GM10248 (cell line): ENCODE measurements at regions of chr4 and their contacts with region 1.

Region 1: GRCh38 chr4:173318648-173319211 is 15.4 kb downstream of the HMGB2 start:
- DNase-seq: no peak
- CTCF ChIP-seq: peak; percentile 9

Region 2: DNA sequence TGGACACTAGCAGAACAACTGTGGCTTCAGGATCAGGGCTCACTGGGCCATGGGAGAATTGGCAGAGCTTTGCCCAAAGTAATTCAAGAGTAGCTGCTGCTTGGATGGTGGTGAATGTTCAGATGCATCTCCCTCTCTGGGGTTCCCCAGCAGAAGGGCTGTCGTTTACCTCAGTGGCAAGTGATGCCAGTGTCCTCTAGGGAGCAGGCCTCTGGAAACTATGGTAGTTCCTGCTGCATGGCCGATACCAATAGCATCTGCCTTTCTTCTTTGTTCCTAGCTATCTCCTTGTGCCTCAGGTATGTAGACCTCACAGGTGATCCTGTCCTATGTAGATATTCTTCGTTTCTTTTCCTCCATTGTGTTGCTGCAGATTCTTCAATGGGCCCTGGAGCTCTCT is 11.0 kb before region 1 on chr4:
- CTCF ChIA-PET with region 1: interaction called, 17 read pairs
- POLR2A ChIA-PET with region 1: no interaction called
- DNase-seq: no peak
- CTCF ChIP-seq: no peak

Region 3: DNA sequence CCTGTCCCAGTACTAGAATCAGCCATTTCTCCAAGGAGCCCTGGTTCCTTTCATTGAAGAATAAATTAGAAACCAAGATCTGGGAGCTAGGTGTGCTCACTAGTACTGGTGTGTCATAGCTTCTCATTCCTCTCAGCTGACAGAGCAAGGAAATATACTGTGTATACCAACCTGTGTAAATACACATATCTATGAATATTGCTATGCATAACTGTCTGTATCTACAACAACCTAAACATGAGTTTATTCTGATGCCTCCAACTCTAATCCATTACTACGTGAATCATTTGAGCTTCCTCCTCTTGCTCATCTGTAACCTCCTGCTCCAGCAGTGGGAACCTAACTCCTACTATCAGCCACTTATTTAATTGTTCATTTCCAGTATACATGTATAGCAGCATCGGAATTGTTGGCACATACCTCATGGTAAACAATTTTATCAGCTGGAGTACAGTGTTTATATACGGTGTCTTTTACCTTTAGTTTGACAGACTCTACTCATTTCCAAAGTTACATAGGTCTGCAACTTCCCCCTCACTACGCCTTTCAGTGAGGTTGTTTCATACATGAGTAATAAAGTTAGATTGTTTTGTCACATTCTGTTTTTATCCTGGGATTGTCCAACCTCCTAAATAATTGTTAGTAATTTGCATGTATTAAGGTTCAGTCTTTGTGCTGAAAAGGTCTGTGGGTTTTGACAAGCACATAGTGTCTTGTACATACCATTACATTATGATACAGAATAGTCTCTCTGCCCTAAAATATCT is 87.3 kb after region 1 on chr4:
- CTCF ChIA-PET with region 1: interaction called, 201 read pairs
- POLR2A ChIA-PET with region 1: no interaction called
- DNase-seq: peak; percentile 20
- CTCF ChIP-seq: no peak